CD4-positive, alpha-beta T cell (primary cell): ENCODE measurements at regions of chr6 and their contacts with region 1.

Region 1: GRCh38 chr6:39114704-39115599 is at the start of gene SAYSD1:
- DNase-seq: peak; percentile 83 to 98 (median 91)
- ATAC-seq: peak; percentile 75
- H3K4me3 ChIP-seq: peak within 1 kb of the TSS; percentile 72
- H3K4me3 Mint-ChIP-seq: peak within 1 kb of the TSS; percentile 98
- H3K27ac ChIP-seq: peak within 1 kb of the TSS; percentile 74 to 90
- H3K27ac Mint-ChIP-seq: peak within 1 kb of the TSS; percentile 92
- H3K4me1 ChIP-seq: peaks cover 11% of the 10 kb centered on the region
- H3K4me1 Mint-ChIP-seq: peaks cover 56% of the 10 kb centered on the region
- H3K27me3 ChIP-seq: no peaks in the 10 kb centered on the region
- H3K27me3 Mint-ChIP-seq: no peaks in the 10 kb centered on the region
- CTCF ChIP-seq: no peak
- total RNA-seq, gene SAYSD1: 18.7 to 21.3 TPM

Region 2: DNA sequence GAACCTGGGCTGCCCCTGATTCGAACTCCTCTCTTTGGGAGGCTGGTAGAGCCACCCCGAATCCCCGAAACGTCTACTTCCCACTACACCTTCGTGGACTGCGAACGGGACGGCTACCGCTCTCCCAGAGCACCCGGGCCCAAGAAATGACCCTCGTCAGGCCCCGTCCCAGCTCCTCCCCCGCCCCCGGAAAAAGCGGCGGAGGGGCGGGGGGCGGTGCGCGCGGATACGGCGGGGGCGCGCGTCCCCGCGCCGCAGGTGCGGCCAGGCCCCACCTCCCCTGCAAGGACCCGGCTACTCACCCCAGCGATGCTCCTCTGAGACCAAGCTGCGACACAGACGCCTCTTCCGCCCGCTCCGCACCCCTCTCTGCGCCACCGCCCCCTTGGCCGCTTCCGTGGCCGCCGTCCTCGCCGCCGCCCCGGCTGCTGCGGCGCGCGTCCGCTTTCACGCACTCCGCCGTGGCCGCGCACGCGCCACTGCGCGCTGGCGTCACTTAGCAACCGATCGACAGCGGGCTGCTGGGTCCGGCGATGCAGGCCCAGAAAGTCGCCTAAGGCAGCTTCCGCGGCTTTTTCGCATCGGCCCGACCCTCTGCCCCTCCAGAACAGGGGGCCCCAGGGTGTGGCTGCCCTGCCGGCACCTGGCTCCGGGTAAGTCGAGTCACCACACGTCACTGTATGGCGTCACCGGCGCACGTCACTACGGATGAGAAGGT is 475.3 kb before region 1 on chr6 and contains the start of gene BTBD9:
- CTCF ChIA-PET with region 1: no interaction called
- POLR2A ChIA-PET with region 1: interaction called, 13 read pairs
- intact Hi-C with region 1: loop called in 1 of 2 experiments (anchors 5 kb)
- DNase-seq: peak; percentile 66 to 95 (median 80)
- ATAC-seq: peak; percentile 75
- H3K4me3 ChIP-seq: peak within 1 kb of the TSS; percentile 78
- H3K4me3 Mint-ChIP-seq: peak within 1 kb of the TSS; percentile 90
- H3K27ac ChIP-seq: peak within 1 kb of the TSS; percentile 94 to 99
- H3K27ac Mint-ChIP-seq: peak within 1 kb of the TSS; percentile 84
- H3K4me1 ChIP-seq: peaks cover 20% of the 10 kb centered on the region
- H3K4me1 Mint-ChIP-seq: peaks cover 52% of the 10 kb centered on the region
- H3K27me3 ChIP-seq: no peaks in the 10 kb centered on the region
- H3K27me3 Mint-ChIP-seq: no peaks in the 10 kb centered on the region
- CTCF ChIP-seq: no peak
- total RNA-seq, gene BTBD9: 58.7 to 59.3 TPM

Region 3: GRCh38 chr6:38702558-38703397 is 412.2 kb before region 1 on chr6 and contains the start of gene GLO1:
- CTCF ChIA-PET with region 1: no interaction called
- POLR2A ChIA-PET with region 1: no interaction called
- intact Hi-C with region 1: loop called (anchors 2 kb)
- DNase-seq: peak; percentile 90 to 98 (median 94)
- ATAC-seq: peak; percentile 99
- H3K4me3 ChIP-seq: peak within 1 kb of the TSS; percentile 82
- H3K4me3 Mint-ChIP-seq: peak within 1 kb of the TSS; percentile 94
- H3K27ac ChIP-seq: peak within 1 kb of the TSS; percentile 82 to 84
- H3K27ac Mint-ChIP-seq: peak within 1 kb of the TSS; percentile 81
- H3K4me1 ChIP-seq: peaks cover 9% of the 10 kb centered on the region
- H3K4me1 Mint-ChIP-seq: peaks cover 29% of the 10 kb centered on the region
- H3K27me3 ChIP-seq: no peaks in the 10 kb centered on the region
- H3K27me3 Mint-ChIP-seq: peaks cover 15% of the 10 kb centered on the region
- CTCF ChIP-seq: no peak
- total RNA-seq, gene GLO1: 24.1 to 26.2 TPM

Region 4: DNA sequence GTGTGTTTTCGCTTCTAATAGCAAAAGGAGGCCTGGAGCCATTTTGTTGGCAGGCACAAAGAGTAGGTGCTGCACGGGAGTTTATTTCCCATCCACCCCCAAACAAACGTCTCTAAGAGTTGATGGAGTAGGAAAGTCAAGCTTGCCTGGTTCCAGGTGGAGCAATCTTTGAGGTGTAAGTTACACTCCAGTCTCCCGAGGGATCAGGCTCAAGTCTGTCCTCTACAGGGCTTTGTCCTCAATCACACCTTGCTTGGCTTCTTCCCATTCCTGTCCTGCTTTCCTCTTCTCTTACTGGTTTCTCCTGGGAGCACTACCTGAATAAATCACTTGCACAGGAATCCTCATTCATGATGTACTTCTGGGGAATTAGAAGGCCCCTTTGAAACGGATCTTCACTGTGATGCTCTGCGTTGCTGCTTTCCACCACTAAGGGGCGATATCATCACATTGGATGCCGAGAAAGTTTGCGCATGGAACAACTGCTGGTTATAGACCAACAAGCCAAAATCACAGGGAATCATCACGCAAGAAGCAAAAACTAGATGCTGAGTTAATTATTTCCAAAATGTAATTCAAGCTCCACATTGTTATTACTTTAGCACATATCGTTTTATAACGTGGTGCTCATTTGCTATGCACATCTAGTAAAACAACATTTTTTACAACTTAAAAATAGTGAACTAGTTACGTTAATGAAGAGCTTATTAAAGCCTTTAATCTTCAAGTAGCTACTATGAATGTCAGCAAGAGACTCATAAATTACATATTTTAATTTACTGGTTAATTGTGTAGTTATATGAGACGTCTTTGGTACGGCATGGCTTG is 243.0 kb before region 1 on chr6:
- CTCF ChIA-PET with region 1: no interaction called
- POLR2A ChIA-PET with region 1: interaction called, 7 read pairs
- intact Hi-C with region 1: loop called in 1 of 2 experiments (anchors 5 kb)
- DNase-seq: peak; percentile 20 to 74 (median 50)
- ATAC-seq: peak; percentile 53
- H3K4me3 ChIP-seq: no peak overlapping the region
- H3K4me3 Mint-ChIP-seq: no peak overlapping the region
- H3K27ac ChIP-seq: no peak overlapping the region
- H3K27ac Mint-ChIP-seq: no peak overlapping the region
- H3K4me1 ChIP-seq: peaks cover 14% of the 10 kb centered on the region
- H3K4me1 Mint-ChIP-seq: peaks cover 44% of the 10 kb centered on the region
- H3K27me3 ChIP-seq: no peaks in the 10 kb centered on the region
- H3K27me3 Mint-ChIP-seq: no peaks in the 10 kb centered on the region
- CTCF ChIP-seq: peak; percentile 86

Region 5: GRCh38 chr6:39102071-39102820 is 12.7 kb before region 1 on chr6:
- CTCF ChIA-PET with region 1: interaction called, 4 read pairs
- POLR2A ChIA-PET with region 1: interaction called, 13 read pairs
- intact Hi-C with region 1: no loop called
- DNase-seq: peak in 3 of 14 experiments; percentile 32 to 47 (median 36)
- ATAC-seq: peak; percentile 50
- H3K4me3 ChIP-seq: no peak overlapping the region
- H3K4me3 Mint-ChIP-seq: no peak overlapping the region
- H3K27ac ChIP-seq: no peak overlapping the region
- H3K27ac Mint-ChIP-seq: no peak overlapping the region
- H3K4me1 ChIP-seq: peaks cover 3% of the 10 kb centered on the region
- H3K4me1 Mint-ChIP-seq: peaks cover 31% of the 10 kb centered on the region
- H3K27me3 ChIP-seq: no peaks in the 10 kb centered on the region
- H3K27me3 Mint-ChIP-seq: no peaks in the 10 kb centered on the region
- CTCF ChIP-seq: peak; percentile 27

Region 6: DNA sequence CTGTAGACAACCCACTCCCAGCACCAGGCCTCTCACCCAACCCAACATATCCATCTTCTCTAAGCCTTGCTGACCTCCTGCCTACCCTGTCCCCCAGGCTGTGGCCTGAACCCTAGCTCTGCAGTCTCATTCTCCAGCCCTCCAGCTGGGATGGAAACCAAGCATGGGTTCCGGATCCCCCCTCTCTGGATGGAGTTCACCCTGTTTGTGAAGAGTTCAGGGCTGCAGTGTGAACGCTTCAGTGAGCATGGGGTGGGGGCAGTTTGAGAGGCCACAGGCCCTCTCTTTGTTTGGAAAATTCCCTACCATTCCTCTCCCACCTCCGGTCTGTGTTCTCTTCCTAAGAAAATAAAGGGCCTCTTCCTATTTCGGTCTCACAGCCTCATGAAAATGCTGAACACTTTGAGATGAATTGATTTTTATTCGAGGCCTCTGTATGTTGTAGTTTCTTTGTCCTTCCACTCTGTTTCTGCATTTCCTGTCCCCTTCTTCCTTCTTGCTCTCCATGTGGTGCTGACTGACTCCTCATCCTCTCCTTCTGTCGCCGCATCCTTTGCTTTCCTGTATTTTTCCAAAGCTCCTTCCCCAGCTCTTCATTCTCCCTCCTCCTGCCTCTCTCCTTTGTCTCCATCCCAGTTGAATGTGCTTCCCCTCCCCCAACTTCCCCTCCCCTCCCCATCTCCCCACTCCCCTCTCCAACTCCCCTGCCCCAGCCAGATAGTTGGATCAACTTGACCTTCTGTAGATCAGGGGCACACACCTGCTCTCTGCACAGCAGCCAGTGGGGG is 116.7 kb after region 1 on chr6:
- CTCF ChIA-PET with region 1: no interaction called
- POLR2A ChIA-PET with region 1: no interaction called
- intact Hi-C with region 1: loop called in 1 of 2 experiments (anchors 5 kb)
- DNase-seq: no peak
- ATAC-seq: no peak
- H3K4me3 ChIP-seq: no peak overlapping the region
- H3K4me3 Mint-ChIP-seq: peak overlapping the region; percentile 46
- H3K27ac ChIP-seq: no peak overlapping the region
- H3K27ac Mint-ChIP-seq: no peak overlapping the region
- H3K4me1 ChIP-seq: peaks cover 30% of the 10 kb centered on the region
- H3K4me1 Mint-ChIP-seq: peaks cover 17% of the 10 kb centered on the region
- H3K27me3 ChIP-seq: peaks cover 6 to 8% of the 10 kb centered on the region in 2 experiments
- H3K27me3 Mint-ChIP-seq: no peaks in the 10 kb centered on the region
- CTCF ChIP-seq: no peak

Region 7: DNA sequence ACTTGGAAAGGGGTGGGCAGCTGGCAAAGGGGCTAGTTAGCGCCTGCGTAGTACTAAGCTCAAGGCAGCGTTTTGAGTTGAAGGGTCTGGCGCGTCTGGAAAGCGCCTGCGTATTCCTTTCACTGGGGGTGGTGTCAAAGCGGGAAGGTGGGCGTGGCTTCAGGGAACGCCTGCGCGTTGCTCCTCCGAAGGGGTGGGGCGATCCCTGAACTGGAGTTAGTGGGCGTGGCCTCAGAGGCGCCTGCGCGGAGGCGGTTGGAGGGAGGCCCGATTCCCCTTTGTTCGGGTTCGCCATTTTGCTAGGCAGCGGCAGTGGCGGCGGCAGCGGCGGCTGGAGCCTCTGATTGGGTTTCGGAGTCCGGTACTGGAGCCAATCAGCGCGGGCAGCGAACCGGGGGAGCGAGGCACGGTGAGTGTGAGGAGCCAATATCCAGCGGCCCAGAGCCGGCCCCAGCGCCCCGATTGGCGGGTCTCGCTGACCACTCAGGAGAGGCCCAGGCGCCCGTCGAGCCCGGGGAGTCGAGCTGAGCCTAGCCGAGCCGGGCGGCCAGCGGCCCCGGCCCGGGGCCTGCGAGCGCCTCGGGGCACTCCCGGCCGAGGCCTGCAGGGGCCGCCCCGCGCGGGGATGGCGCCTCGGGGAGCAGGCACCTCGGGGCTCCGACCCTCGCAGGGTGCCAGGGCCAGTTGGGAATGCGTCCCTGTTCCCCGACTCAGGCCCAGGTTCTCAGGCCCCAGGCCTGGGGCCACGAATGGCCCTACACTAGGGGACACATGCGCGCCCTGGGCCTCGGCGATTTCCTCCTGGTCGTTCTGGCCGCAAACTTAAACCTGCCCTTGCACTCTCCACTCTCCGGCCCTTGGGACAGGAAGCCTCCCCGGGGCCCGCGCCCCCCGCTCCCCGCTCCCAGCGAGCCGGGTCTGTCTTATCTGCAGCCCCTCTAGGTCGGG is 1958.0 kb after region 1 on chr6 and contains the start of gene NFYA:
- CTCF ChIA-PET with region 1: no interaction called
- POLR2A ChIA-PET with region 1: interaction called, 4 read pairs
- intact Hi-C with region 1: loop called in 1 of 2 experiments (anchors 10 kb)
- DNase-seq: peak in 13 of 14 experiments; percentile 100
- ATAC-seq: peak; percentile 62
- H3K4me3 ChIP-seq: peak within 1 kb of the TSS; percentile 70
- H3K4me3 Mint-ChIP-seq: peak within 1 kb of the TSS; percentile 93
- H3K27ac ChIP-seq: peak within 1 kb of the TSS; percentile 95 to 96
- H3K27ac Mint-ChIP-seq: peak within 1 kb of the TSS; percentile 88
- H3K4me1 ChIP-seq: peaks cover 23% of the 10 kb centered on the region
- H3K4me1 Mint-ChIP-seq: peaks cover 51% of the 10 kb centered on the region
- H3K27me3 ChIP-seq: no peaks in the 10 kb centered on the region
- H3K27me3 Mint-ChIP-seq: no peaks in the 10 kb centered on the region
- CTCF ChIP-seq: peak; percentile 33
- total RNA-seq, gene NFYA: 26.7 to 27.3 TPM